ENCODE measurements at regions of chr2 and their contacts with region 1.

Region 1: DNA sequence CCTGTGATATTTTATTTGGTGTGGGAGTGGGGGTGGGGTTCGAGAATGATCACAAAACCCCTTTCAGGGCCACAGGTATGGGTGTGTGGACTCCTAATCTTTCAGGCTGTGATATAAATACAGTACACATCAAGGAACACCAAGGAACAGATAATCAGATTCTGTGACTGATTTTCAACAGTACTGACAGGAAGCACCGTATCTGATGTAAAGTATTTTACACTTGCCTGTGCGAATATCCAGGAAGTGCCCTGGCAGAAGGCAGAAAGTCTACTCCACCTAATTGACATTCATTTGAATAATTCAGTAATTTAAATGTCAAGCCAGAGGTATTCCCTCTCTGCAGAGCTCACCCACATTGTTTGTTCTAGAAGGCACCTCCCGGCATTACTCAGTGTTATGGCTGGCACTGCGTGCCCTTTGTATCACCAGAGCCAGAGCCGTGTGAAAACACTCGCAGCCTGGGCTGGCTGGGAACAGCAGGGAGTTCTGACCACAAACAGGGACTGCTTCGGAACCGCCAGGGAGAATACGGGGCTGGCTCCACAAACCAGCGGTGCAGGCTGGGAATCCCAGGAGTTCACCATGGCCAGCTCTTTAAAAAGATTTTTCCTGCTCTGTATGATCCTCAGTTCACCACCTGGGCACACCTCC is 91.8 kb downstream of the ACVR1 start:
- DNase-seq: peak; percentile 42
- ATAC-seq: peak; percentile 71
- H3K4me3 Mint-ChIP-seq: no peak overlapping the region
- H3K27ac Mint-ChIP-seq: peak overlapping the region; percentile 51
- H3K4me1 Mint-ChIP-seq: peaks cover 49% of the 10 kb centered on the region
- H3K27me3 Mint-ChIP-seq: no peaks in the 10 kb centered on the region

Region 2: DNA sequence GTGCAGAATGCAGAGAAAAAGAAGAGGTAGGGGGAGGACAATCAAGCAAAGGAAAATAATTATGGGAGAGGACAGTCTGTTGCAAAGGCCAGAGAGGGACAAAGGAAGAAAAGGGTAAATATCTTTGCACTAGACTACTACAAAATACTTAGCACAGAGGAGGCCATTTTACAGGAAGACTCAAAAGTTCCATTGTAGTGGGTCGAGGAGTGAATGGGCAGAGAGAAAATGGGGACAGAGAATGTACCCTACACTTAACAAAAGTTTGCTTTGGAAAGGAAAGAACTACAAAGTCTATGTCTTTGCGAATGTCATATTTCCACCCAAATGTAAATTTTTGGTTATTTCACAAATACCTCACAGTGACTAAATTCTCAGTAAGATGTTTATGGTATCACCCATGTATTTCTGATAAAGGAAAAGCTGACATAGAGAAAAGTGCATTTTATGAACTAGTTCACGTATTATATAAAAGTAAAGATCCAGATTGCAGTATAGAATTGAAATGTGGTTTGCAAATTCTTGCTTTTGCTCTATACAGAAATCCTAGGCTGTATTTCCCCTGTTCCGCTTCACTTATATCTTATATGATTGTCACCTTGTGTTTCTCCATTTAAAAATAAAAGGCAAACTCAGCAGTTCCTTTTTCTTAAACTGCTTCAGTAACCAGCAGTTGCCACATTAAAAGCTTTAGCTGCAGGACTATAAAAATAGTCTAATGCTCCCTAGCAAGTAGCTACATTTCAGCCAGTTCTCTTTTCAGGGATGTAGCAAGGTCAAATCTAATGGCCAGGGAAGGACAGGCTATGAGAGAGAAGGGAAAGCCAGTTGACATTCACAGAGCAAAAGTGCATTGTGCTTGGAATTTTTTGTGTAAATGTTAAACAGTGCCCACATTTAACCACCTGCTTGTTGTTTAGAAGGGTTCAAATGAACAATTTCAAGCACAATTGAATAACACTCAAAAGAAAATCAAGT is 260.7 kb before region 1 on chr2:
- CTCF ChIA-PET with region 1: no interaction called
- POLR2A ChIA-PET with region 1: no interaction called
- intact Hi-C with region 1: no loop called
- DNase-seq: no peak
- ATAC-seq: no peak
- H3K4me3 Mint-ChIP-seq: no peak overlapping the region
- H3K27ac Mint-ChIP-seq: no peak overlapping the region
- H3K4me1 Mint-ChIP-seq: no peaks in the 10 kb centered on the region
- H3K27me3 Mint-ChIP-seq: peaks cover 3% of the 10 kb centered on the region

Region 3: DNA sequence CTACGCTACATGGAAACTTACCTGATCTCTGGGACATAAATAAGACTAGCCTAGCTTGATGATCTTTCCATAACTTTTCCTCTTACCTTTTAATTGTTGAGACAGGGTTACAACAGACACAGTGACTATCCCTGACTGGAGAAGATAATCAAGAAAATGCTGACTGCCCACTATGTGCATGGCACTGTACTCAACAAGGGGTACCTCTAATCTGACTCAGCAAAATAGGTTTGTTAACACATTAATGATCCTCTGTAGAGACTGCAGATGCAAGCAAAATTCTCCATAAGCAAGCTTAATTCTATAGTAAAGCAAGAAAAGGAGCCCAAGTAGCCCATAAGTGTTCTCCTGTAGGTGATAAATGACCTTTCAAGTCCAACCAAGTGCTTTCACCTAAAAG is 181.1 kb before region 1 on chr2:
- CTCF ChIA-PET with region 1: no interaction called
- POLR2A ChIA-PET with region 1: no interaction called
- intact Hi-C with region 1: no loop called
- DNase-seq: no peak
- ATAC-seq: no peak
- H3K4me3 Mint-ChIP-seq: no peak overlapping the region
- H3K27ac Mint-ChIP-seq: no peak overlapping the region
- H3K4me1 Mint-ChIP-seq: no peaks in the 10 kb centered on the region
- H3K27me3 Mint-ChIP-seq: peaks cover 2% of the 10 kb centered on the region

Region 4: GRCh38 chr2:157751462-157752058 is 32.7 kb before region 1 on chr2:
- CTCF ChIA-PET with region 1: no interaction called
- POLR2A ChIA-PET with region 1: no interaction called
- intact Hi-C with region 1: no loop called
- DNase-seq: peak; percentile 47
- ATAC-seq: peak; percentile 44
- H3K4me3 Mint-ChIP-seq: no peak overlapping the region
- H3K27ac Mint-ChIP-seq: no peak overlapping the region
- H3K4me1 Mint-ChIP-seq: peaks cover 10% of the 10 kb centered on the region
- H3K27me3 Mint-ChIP-seq: no peaks in the 10 kb centered on the region

Region 5: DNA sequence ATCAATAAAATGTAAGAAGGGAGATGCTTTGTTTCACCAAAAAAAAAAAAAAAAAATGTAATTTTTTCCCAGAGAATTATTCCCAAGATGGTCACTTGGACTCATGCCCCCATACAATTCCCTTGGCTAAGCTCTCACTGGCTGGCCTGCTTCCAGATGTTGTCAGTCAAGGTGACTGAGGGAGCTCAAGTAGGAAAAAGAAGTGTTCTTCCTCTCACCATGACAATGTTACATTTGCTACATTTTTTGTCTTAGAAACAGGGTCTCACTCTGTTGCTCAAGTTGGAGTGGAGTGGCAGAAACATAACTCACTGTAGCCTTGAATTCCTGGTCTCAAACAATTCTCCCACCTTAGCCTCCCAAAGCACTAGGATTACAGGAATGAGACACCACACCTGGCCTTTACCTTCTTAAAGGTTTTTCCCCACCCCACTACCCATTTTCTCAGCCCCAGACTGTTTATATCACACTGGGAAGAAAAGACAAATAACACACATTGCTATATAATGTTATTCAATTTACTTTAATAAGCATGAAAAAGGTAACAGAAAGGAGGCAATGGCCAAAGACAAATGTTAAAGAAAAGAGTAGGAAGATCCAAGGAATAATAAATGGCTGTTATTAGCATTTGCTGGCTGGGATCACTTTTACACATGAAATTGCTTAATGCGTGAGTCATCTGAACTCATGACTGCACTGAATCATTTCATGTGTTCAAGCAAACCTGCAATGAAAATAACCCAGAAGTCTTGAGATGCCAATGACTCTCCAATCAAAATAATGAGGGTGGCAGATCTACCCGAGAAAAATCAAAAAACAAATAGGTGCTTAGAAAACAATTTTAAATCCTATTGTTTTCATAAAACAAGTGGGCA is 46.6 kb after region 1 on chr2:
- CTCF ChIA-PET with region 1: no interaction called
- POLR2A ChIA-PET with region 1: no interaction called
- intact Hi-C with region 1: no loop called
- DNase-seq: no peak
- ATAC-seq: peak; percentile 65
- H3K4me3 Mint-ChIP-seq: no peak overlapping the region
- H3K27ac Mint-ChIP-seq: peak overlapping the region; percentile 33
- H3K4me1 Mint-ChIP-seq: peaks cover 26% of the 10 kb centered on the region
- H3K27me3 Mint-ChIP-seq: no peaks in the 10 kb centered on the region

Region 6: DNA sequence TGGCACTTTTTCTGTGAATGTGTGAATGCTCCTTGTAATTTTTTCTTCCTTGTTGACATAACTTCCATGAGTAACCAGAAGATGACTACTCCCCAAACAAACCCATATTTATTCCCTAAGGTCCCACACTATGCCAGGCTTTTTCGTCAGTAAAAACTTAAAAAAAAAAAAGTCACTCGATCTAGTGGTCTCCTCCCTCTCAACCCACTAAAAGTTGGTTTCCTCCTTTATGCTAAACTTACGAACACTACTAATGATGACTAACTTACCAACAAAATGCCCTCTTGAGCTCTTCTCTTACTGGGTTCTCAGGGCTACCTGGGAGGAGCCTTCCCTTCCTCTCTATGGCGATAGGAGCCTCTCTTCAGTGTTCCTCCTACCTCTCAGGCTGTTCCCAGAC is 73.6 kb after region 1 on chr2:
- CTCF ChIA-PET with region 1: interaction called, 3 read pairs
- POLR2A ChIA-PET with region 1: no interaction called
- intact Hi-C with region 1: loop called in 1 of 2 experiments (anchors 5 kb)
- DNase-seq: no peak
- ATAC-seq: no peak
- H3K4me3 Mint-ChIP-seq: no peak overlapping the region
- H3K27ac Mint-ChIP-seq: peak overlapping the region; percentile 11
- H3K4me1 Mint-ChIP-seq: peaks cover 32% of the 10 kb centered on the region
- H3K27me3 Mint-ChIP-seq: no peaks in the 10 kb centered on the region

Measured in activated CD4-positive, alpha-beta T cell treated with anti-CD3 and anti-CD28 coated beads for 36 hours (primary cell).